ENCODE measurements at regions of chr7 and their contacts with region 1.

Region 1: GRCh38 chr7:55206235-55207029 is 158.7 kb upstream of the LANCL2 start:
- DNase-seq: peak; percentile 35
- H3K4me3 ChIP-seq: no peak overlapping the region
- CTCF ChIP-seq: no peak

Region 2: DNA sequence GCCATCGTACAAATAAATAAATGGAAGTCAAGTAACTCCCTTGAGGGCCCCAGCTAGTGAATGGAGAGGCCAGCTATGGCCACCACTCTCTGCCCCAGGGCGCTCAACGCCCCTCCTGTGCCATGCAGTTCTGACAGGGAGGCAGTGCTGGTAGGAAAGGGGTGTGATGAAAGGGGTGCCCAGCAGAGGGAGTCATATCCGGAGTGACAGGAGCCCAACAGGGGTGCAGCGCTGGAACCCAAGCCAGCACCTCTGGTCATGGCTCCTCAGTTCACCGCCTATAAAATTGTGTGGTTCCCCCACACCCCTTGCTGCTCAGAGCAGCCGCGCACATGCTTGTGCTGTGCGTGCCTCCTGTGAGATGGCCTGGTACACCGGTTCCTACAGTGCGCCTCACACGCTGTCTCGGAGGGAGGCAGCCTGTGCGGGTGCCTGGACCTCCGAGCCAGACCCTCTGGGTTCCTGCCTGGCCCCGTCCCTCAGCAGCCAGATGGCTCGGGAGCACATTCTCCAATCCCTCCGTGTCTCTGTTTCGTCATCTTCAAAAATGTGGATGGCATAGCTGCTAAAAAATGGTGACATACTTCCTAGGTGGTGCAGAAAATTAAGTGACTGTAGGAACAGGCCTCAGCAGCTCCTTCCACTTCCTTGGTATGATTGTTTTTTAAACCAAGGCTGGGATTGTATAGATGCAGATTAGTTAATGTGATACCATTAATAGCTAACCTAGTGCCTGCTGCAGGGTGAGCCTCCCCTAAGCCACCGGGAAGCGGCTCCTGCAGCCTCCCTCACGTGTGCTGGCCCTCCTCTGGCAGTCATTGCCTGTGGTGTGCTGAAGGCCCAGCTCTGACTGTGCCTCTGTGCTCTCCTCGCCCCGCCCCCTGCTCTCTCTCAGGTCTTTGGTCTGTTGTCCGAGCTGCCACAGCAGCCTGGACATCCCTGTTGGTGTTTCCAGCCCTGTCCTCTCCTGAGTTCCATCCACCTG is 61.8 kb before region 1 on chr7:
- in situ Hi-C with region 1: loop called (anchors 5 kb)
- DNase-seq: no peak
- H3K4me3 ChIP-seq: no peak overlapping the region
- CTCF ChIP-seq: peak; percentile 24

Measured in astrocyte of the cerebellum (primary cell).